MCF 10A (cell line): ENCODE measurements at regions of chr20 and their contacts with region 1.

Region 1: DNA sequence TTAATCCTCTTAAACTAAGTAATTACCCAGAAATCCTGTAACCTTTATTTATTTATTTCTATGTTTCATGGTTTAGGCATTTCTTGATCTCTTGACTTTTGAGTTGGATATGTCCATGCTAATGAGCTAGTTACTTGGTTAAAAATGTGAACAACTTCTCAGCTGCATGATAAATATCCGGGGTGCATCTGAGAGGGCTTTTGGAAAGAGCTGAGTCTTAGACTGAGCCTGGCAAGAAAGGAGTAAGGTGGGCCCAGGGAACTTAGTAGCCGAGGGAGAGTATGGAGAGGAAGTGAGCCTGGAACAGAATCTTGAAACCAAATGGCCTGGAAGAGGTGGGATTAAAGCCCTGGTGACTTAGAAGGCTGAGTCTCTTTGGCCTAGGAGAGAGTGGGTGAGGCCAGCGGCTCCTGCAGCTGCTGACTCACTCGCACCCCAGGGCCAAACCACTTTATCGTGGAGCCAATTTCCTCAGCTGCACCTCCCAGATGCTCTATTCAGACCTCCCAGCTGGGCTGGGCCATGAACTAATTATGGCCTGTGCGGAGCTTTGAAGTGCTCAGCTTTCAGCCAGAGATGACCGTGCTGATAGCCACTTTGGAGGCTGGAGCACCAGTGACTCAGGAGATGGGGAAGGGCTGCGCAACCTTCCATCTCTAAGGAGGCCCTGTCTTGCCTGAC is 19.1 kb downstream of the TGM3 start:
- DNase-seq: peak; percentile 95
- H3K4me3 Mint-ChIP-seq: peak overlapping the region; percentile 1
- H3K27ac Mint-ChIP-seq: peak overlapping the region; percentile 20
- H3K4me1 Mint-ChIP-seq: peaks cover 20% of the 10 kb centered on the region
- H3K27me3 Mint-ChIP-seq: no peaks in the 10 kb centered on the region
- CTCF ChIP-seq: no peak

Region 2: GRCh38 chr20:2118783-2119182 is 196.1 kb before region 1 on chr20:
- CTCF ChIA-PET with region 1: no interaction called
- POLR2A ChIA-PET with region 1: no interaction called
- intact Hi-C with region 1: no loop called
- DNase-seq: peak; percentile 74
- H3K4me3 Mint-ChIP-seq: no peak overlapping the region
- H3K27ac Mint-ChIP-seq: no peak overlapping the region
- H3K4me1 Mint-ChIP-seq: peaks cover 24% of the 10 kb centered on the region
- H3K27me3 Mint-ChIP-seq: no peaks in the 10 kb centered on the region
- CTCF ChIP-seq: no peak

Region 3: DNA sequence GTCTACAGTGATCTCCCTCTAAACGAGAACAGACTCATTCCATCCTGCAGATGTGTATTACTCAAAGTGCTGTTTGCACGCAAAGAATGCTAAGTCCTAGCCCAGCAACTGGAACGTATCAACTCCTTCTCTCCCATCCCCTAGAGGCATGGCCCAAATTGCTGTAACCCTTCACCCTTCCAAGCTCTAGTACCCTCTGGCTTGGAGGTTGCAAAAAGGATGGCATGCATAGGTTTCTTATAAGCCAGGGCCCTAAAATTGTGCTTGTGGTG is 90.6 kb before region 1 on chr20:
- CTCF ChIA-PET with region 1: no interaction called
- POLR2A ChIA-PET with region 1: no interaction called
- intact Hi-C with region 1: no loop called
- DNase-seq: no peak
- H3K4me3 Mint-ChIP-seq: no peak overlapping the region
- H3K27ac Mint-ChIP-seq: no peak overlapping the region
- H3K4me1 Mint-ChIP-seq: no peaks in the 10 kb centered on the region
- H3K27me3 Mint-ChIP-seq: peaks cover 2% of the 10 kb centered on the region
- CTCF ChIP-seq: no peak

Region 4: DNA sequence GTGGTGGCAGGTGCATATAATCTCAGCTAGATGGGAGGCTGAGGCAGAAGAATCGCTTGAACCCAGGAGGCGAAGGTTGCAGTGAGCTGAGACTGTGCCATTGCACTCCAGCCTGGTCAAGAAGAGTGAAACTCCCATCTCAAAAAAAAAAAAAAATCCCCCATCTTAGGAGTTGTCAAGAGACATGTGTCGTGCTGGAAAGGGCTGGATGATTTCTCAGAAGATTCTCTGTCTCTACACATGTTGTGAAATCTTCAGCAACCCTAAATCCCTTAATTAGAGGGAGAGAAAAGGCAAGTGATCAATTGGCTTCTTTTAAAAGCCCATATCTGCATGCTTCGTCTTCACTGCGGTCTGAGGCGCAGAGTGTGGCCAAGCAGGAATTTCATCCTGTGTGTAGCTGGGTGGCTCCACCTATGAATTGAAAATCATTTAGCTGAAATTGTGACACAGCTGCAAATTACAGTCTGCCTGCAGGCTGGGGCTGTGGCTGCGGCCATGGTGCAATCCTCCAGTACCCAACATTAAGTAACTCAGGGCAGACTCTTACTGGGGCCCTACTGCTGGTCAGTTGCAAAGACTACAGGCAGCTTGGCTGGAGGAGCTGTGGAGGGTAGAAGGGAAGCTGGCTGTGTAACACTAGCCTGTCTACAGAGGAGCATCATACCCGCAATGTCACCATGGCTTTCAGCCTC is 22.3 kb before region 1 on chr20:
- CTCF ChIA-PET with region 1: interaction called, 4 read pairs
- POLR2A ChIA-PET with region 1: interaction called, 12 read pairs
- intact Hi-C with region 1: no loop called
- DNase-seq: peak; percentile 51
- H3K4me3 Mint-ChIP-seq: no peak overlapping the region
- H3K27ac Mint-ChIP-seq: no peak overlapping the region
- H3K4me1 Mint-ChIP-seq: peaks cover 7% of the 10 kb centered on the region
- H3K27me3 Mint-ChIP-seq: no peaks in the 10 kb centered on the region
- CTCF ChIP-seq: no peak

Region 5: GRCh38 chr20:2301164-2301622 is 13.7 kb before region 1 on chr20:
- CTCF ChIA-PET with region 1: interaction called, 5 read pairs
- POLR2A ChIA-PET with region 1: interaction called, 14 read pairs
- intact Hi-C with region 1: no loop called
- DNase-seq: peak; percentile 58
- H3K4me3 Mint-ChIP-seq: no peak overlapping the region
- H3K27ac Mint-ChIP-seq: no peak overlapping the region
- H3K4me1 Mint-ChIP-seq: peaks cover 18% of the 10 kb centered on the region
- H3K27me3 Mint-ChIP-seq: peaks cover 30% of the 10 kb centered on the region
- CTCF ChIP-seq: no peak

Region 6: GRCh38 chr20:2364044-2364443 is 49.1 kb after region 1 on chr20:
- CTCF ChIA-PET with region 1: no interaction called
- POLR2A ChIA-PET with region 1: no interaction called
- intact Hi-C with region 1: no loop called
- DNase-seq: peak; percentile 65
- H3K4me3 Mint-ChIP-seq: no peak overlapping the region
- H3K27ac Mint-ChIP-seq: peak overlapping the region; percentile 24
- H3K4me1 Mint-ChIP-seq: peaks cover 13% of the 10 kb centered on the region
- H3K27me3 Mint-ChIP-seq: no peaks in the 10 kb centered on the region
- CTCF ChIP-seq: no peak